Activated naive CD4-positive, alpha-beta T cell treated with anti-CD3 and anti-CD28 coated beads for 36 hours (primary cell): ENCODE measurements at regions of chr1 and their contacts with region 1.

Region 1: GRCh38 chr1:154352581-154353459 is 27.5 kb downstream of the ATP8B2 start:
- DNase-seq: peak; percentile 85
- H3K4me3 Mint-ChIP-seq: peak overlapping the region; percentile 82
- H3K27ac Mint-ChIP-seq: peak overlapping the region; percentile 76
- H3K4me1 Mint-ChIP-seq: peaks cover 31% of the 10 kb centered on the region
- H3K27me3 Mint-ChIP-seq: no peaks in the 10 kb centered on the region

Region 2: GRCh38 chr1:153577624-153578051 is 775.2 kb before region 1 on chr1:
- CTCF ChIA-PET with region 1: no interaction called
- intact Hi-C with region 1: no loop called
- DNase-seq: no peak
- H3K4me3 Mint-ChIP-seq: no peak overlapping the region
- H3K27ac Mint-ChIP-seq: no peak overlapping the region
- H3K4me1 Mint-ChIP-seq: peaks cover 9% of the 10 kb centered on the region
- H3K27me3 Mint-ChIP-seq: peaks cover 7% of the 10 kb centered on the region

Region 3: GRCh38 chr1:154386643-154387352 is 34.0 kb after region 1 on chr1:
- CTCF ChIA-PET with region 1: no interaction called
- intact Hi-C with region 1: loop called (anchors 1 kb)
- DNase-seq: peak; percentile 88
- H3K4me3 Mint-ChIP-seq: peak overlapping the region; percentile 60
- H3K27ac Mint-ChIP-seq: peak overlapping the region; percentile 90
- H3K4me1 Mint-ChIP-seq: peaks cover 39% of the 10 kb centered on the region
- H3K27me3 Mint-ChIP-seq: no peaks in the 10 kb centered on the region

Region 4: DNA sequence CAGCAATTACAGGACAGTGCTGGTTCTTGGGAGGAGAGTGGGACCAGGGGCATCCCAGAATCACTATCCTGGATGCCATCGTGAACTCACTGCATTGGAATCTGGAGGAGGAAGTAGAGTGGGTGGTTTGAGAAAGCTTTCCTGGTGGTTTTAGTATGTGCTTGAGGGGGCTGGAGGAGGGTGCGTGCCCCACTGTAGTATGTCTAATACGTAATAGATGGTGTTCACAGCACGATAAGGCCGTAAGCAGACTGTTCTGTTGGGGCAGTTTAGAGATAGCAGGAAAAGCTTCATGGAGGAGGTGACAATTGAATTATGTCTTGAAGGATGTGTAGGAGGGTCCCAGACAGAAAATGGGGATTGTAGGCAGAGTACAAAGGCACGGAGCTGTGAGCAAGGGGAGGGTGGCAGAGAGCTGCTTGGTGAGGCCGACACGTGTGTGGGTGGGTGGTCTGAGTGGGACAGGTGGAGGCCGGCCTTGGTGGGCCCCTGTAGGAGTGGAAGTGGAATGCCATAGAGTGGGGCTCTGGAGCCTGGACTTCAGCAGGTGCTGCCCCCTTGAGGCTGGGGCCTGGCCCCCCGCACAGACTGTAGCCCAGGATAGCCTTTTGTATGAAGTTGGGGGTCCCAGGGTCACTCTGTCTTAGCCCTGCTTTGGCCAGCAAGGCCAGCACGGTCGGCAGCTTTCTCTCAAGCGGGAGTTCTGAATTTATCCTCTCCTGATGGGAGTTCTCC is 89.4 kb after region 1 on chr1:
- CTCF ChIA-PET with region 1: interaction called, 4 read pairs
- intact Hi-C with region 1: loop called (anchors 1 kb)
- DNase-seq: no peak
- H3K4me3 Mint-ChIP-seq: no peak overlapping the region
- H3K27ac Mint-ChIP-seq: no peak overlapping the region
- H3K4me1 Mint-ChIP-seq: peaks cover 72% of the 10 kb centered on the region
- H3K27me3 Mint-ChIP-seq: no peaks in the 10 kb centered on the region

Region 5: DNA sequence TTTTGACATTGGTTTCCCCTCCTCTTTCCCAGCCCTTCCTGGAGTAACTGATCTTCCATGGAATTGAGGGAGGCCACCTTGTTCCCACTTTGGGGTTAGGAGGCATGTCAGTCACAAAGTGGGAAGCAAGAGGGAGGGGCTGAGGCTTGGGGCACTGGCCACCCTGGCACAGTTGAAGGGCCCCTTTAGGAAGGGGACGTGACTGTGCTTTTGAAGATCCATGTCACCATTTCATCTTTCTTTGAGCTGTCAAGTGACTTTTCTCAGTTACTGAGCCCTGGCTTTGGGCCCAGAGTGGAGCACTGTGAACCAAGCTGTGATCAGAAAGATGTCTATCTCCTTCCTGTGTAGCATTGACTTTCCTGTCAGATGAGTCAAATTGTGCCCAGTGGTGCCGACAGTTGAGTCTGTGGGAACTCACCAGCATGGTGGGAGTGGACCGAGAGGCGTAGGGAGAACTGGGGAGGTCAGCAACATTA is 110.7 kb after region 1 on chr1:
- CTCF ChIA-PET with region 1: interaction called, 3 read pairs
- intact Hi-C with region 1: loop called (anchors 1 kb)
- DNase-seq: peak; percentile 89
- H3K4me3 Mint-ChIP-seq: no peak overlapping the region
- H3K27ac Mint-ChIP-seq: peak overlapping the region; percentile 78
- H3K4me1 Mint-ChIP-seq: peaks cover 73% of the 10 kb centered on the region
- H3K27me3 Mint-ChIP-seq: no peaks in the 10 kb centered on the region

Region 6: GRCh38 chr1:154546264-154547063 is 193.6 kb after region 1 on chr1:
- CTCF ChIA-PET with region 1: interaction called, 3 read pairs
- intact Hi-C with region 1: loop called (anchors 2 kb)
- DNase-seq: peak; percentile 77
- H3K4me3 Mint-ChIP-seq: no peak overlapping the region
- H3K27ac Mint-ChIP-seq: no peak overlapping the region
- H3K4me1 Mint-ChIP-seq: peaks cover 21% of the 10 kb centered on the region
- H3K27me3 Mint-ChIP-seq: no peaks in the 10 kb centered on the region